Endothelial cell of umbilical vein (primary cell): ENCODE measurements at regions of chr1 and their contacts with region 1.

Region 1: GRCh38 chr1:207698822-207699483 is 52.9 kb upstream of the CD46 start:
- DNase-seq: peak; percentile 68
- H3K4me3 ChIP-seq: no peak overlapping the region
- H3K27ac ChIP-seq: no peak overlapping the region
- H3K4me1 ChIP-seq: no peaks in the 10 kb centered on the region
- H3K27me3 ChIP-seq: no peaks in the 10 kb centered on the region
- CTCF ChIP-seq: peak; percentile 56 to 71
- POLR2A ChIP-seq: no peak

Region 2: GRCh38 chr1:207579436-207579799 is 119.5 kb before region 1 on chr1:
- CTCF ChIA-PET with region 1: interaction called, 26 read pairs
- POLR2A ChIA-PET with region 1: no interaction called
- dilution Hi-C with region 1: no loop called
- intact Hi-C with region 1: loop called (anchors 1 kb)
- DNase-seq: peak; percentile 70
- H3K4me3 ChIP-seq: no peak overlapping the region
- H3K27ac ChIP-seq: no peak overlapping the region
- H3K4me1 ChIP-seq: no peaks in the 10 kb centered on the region
- H3K27me3 ChIP-seq: peaks cover 4 to 12% of the 10 kb centered on the region in 2 experiments
- CTCF ChIP-seq: peak; percentile 52 to 70
- POLR2A ChIP-seq: no peak

Region 3: DNA sequence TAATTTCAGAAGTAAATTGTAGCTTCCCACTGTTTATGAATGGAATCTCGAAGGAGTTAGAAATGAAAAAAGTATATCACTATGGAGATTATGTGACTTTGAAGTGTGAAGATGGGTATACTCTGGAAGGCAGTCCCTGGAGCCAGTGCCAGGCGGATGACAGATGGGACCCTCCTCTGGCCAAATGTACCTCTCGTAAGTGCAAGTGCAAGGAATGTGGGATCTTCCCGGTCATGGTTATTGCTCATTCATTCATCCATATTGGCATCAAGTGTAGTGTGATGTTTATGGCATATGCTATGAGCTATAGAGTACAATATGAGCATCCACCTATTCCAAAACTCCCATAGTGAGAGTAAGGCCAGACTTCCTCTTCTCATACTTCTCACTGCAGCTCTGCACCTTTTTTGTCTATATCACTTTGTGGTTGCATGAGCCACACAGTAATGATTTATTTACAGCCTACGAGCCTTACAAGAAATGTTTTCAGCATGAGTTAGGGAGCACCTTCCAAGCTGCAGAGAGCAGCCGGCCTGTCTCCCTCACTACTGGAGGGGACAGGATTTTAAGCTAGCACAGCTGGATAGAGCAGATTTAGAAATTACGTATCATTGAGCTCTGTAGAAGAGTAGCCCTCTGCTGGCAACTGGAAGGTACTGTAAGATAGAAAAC is 78.9 kb before region 1 on chr1:
- CTCF ChIA-PET with region 1: interaction called, 5 read pairs
- POLR2A ChIA-PET with region 1: no interaction called
- dilution Hi-C with region 1: no loop called
- intact Hi-C with region 1: loop called (anchors 1 kb)
- DNase-seq: peak; percentile 50
- H3K4me3 ChIP-seq: no peak overlapping the region
- H3K27ac ChIP-seq: no peak overlapping the region
- H3K4me1 ChIP-seq: no peaks in the 10 kb centered on the region
- H3K27me3 ChIP-seq: peaks cover 2 to 6% of the 10 kb centered on the region in 2 experiments
- CTCF ChIP-seq: peak; percentile 49 to 77
- POLR2A ChIP-seq: no peak

Region 4: DNA sequence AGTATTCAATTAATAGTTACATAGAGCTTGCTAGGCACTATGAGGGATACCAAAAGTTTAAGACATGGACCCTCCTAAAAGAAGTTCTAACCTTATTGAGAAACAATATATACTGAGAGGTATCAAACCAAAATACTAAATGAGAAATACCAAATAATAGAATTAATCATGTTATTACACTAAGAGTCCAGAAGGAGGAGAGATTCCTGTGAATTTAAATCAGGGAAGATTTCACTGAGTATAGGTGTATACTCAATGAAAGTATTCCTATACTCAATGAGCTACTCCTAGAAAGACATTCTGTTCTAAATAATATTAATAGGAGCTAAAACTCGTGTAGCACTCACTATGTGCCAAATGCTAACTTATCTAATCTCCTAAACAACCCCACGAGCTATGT is 44.6 kb before region 1 on chr1:
- CTCF ChIA-PET with region 1: interaction called, 19 read pairs
- POLR2A ChIA-PET with region 1: no interaction called
- dilution Hi-C with region 1: no loop called
- intact Hi-C with region 1: loop called (anchors 2 kb)
- DNase-seq: peak; percentile 6
- H3K4me3 ChIP-seq: no peak overlapping the region
- H3K27ac ChIP-seq: no peak overlapping the region
- H3K4me1 ChIP-seq: no peaks in the 10 kb centered on the region
- H3K27me3 ChIP-seq: peaks cover 7 to 19% of the 10 kb centered on the region in 2 experiments
- CTCF ChIP-seq: no peak
- POLR2A ChIP-seq: no peak